ENCODE measurements at regions of chr2 and their contacts with region 1.

Region 1: GRCh38 chr2:159712143-159712928 is at the start of gene MARCHF7:
- DNase-seq: peak; percentile 95 to 98 (median 96)
- ATAC-seq: peak; percentile 88
- H3K4me3 ChIP-seq: peak within 1 kb of the TSS; percentile 89
- H3K4me3 Mint-ChIP-seq: peak within 1 kb of the TSS; percentile 100
- H3K27ac ChIP-seq: peak within 1 kb of the TSS; percentile 93 to 98
- H3K27ac Mint-ChIP-seq: peak within 1 kb of the TSS; percentile 94
- H3K4me1 ChIP-seq: peaks cover 31% of the 10 kb centered on the region
- H3K4me1 Mint-ChIP-seq: peaks cover 66% of the 10 kb centered on the region
- H3K27me3 ChIP-seq: no peaks in the 10 kb centered on the region
- H3K27me3 Mint-ChIP-seq: no peaks in the 10 kb centered on the region
- CTCF ChIP-seq: peak; percentile 22
- total RNA-seq, gene MARCHF7: 58.1 to 61.4 TPM

Region 2: DNA sequence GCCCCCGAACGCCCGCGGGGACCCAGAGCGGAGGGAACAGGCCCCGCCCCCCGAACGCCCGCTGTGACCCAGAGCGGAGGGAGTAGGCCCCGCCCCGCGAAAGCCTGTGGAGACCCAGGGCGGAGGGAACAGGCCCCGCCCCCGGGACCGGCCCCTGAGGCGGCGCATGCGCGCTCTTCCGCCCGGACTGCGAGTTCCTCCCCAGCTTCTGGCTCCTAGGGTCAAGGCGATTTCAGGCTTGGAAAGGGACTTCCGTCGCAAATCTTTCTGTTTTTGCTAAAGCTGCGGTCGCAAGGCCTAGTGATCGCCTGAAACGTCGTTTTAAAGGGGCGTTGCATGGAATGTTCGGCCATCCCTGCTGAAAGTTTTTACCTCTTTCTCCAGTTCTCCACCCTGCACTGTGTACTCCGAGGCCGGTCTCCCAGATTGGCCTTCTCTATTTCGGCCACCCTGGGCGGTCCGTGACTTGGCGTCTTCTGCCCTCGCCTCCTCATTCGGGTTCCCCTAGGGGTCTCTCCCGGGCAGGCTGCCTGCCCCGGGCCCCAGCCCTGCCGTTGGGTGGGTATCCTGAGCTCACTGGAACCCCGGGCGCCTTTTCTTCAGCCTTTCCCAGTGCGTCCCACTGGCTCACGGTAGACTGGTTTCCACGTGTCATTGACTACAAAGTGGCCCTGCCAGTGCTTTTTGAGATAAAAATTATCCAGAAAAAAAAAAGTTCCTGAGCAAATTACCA is 425.5 kb before region 1 on chr2:
- CTCF ChIA-PET with region 1: interaction called, 3 read pairs
- POLR2A ChIA-PET with region 1: interaction called, 25 read pairs
- intact Hi-C with region 1: loop called (anchors 2 to 5 kb)
- DNase-seq: peak; percentile 93 to 100 (median 97)
- ATAC-seq: peak; percentile 98
- H3K4me3 ChIP-seq: peak overlapping the region; percentile 88
- H3K4me3 Mint-ChIP-seq: peak overlapping the region; percentile 90
- H3K27ac ChIP-seq: peak overlapping the region in 1 of 2 donors; percentile 69
- H3K27ac Mint-ChIP-seq: peak overlapping the region; percentile 77
- H3K4me1 ChIP-seq: peaks cover 24% of the 10 kb centered on the region
- H3K4me1 Mint-ChIP-seq: peaks cover 46% of the 10 kb centered on the region
- H3K27me3 ChIP-seq: no peaks in the 10 kb centered on the region
- H3K27me3 Mint-ChIP-seq: no peaks in the 10 kb centered on the region
- CTCF ChIP-seq: no peak

Region 3: GRCh38 chr2:159615140-159615951 is 97.0 kb before region 1 on chr2:
- CTCF ChIA-PET with region 1: no interaction called
- POLR2A ChIA-PET with region 1: interaction called, 20 read pairs
- intact Hi-C with region 1: loop called in 1 of 2 experiments (anchors 5 kb)
- DNase-seq: peak in 11 of 14 experiments; percentile 8 to 66 (median 14)
- ATAC-seq: peak; percentile 50
- H3K4me3 ChIP-seq: peak overlapping the region; percentile 67
- H3K4me3 Mint-ChIP-seq: peak overlapping the region; percentile 86
- H3K27ac ChIP-seq: no peak overlapping the region
- H3K27ac Mint-ChIP-seq: no peak overlapping the region
- H3K4me1 ChIP-seq: peaks cover 10% of the 10 kb centered on the region
- H3K4me1 Mint-ChIP-seq: peaks cover 15% of the 10 kb centered on the region
- H3K27me3 ChIP-seq: peaks cover 11 to 13% of the 10 kb centered on the region in 2 experiments
- H3K27me3 Mint-ChIP-seq: peaks cover 17% of the 10 kb centered on the region
- CTCF ChIP-seq: no peak

Region 4: GRCh38 chr2:159785195-159785594 is 72.9 kb after region 1 on chr2:
- CTCF ChIA-PET with region 1: no interaction called
- POLR2A ChIA-PET with region 1: no interaction called
- intact Hi-C with region 1: no loop called
- DNase-seq: no peak
- ATAC-seq: no peak
- H3K4me3 ChIP-seq: no peak overlapping the region
- H3K4me3 Mint-ChIP-seq: no peak overlapping the region
- H3K27ac ChIP-seq: no peak overlapping the region
- H3K27ac Mint-ChIP-seq: no peak overlapping the region
- H3K4me1 ChIP-seq: no peaks in the 10 kb centered on the region
- H3K4me1 Mint-ChIP-seq: peaks cover 5% of the 10 kb centered on the region
- H3K27me3 ChIP-seq: no peaks in the 10 kb centered on the region
- H3K27me3 Mint-ChIP-seq: no peaks in the 10 kb centered on the region
- CTCF ChIP-seq: no peak

Region 5: DNA sequence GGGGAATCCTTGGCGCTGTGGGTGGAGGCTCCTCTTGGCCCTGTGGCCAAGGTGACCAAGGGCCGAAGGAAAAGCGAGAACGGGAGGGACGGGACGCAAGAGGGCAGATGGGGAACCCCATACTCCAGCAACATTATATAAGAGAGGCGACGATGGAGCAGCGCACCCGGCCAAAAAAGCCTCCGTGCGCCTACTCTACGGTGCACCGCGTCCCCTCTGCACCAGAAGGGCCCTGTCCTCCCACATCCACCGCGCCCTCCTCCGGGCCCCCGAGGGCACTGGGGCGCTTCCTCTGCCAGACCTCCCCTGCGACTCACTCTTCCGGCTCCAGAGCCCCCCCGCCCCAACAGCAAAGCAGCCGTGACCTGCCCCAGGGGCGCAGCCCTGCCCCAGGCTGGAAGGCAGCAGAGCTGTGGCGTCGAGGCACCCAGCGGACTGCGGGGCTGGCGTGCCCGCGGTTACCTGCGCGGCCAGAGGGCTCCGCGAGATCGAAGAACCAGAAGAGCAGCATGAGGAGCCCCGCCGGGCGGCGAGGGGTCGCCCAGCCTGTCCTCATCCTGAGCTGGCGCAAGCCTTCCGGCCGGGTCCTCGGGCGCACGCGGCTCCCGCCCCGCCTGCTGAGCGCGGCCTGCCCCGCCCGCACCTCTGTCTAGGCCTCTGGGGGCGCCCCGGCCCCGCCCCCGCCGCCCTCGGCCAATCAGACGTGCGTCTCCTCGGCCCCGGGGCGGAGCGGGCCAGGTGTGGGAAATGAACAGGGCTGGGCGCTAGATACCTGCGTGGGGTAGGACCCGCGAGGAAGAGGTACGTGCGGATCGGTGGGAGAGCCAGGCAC is 192.0 kb after region 1 on chr2:
- CTCF ChIA-PET with region 1: no interaction called
- POLR2A ChIA-PET with region 1: interaction called, 17 read pairs
- intact Hi-C with region 1: loop called in 1 of 2 experiments (anchors 5 kb)
- DNase-seq: peak; percentile 64 to 91 (median 80)
- ATAC-seq: peak; percentile 81
- H3K4me3 ChIP-seq: peak within 1 kb of the TSS; percentile 97
- H3K4me3 Mint-ChIP-seq: peak within 1 kb of the TSS; percentile 99
- H3K27ac ChIP-seq: peak within 1 kb of the TSS; percentile 73 to 91
- H3K27ac Mint-ChIP-seq: peak within 1 kb of the TSS; percentile 93
- H3K4me1 ChIP-seq: peaks cover 31% of the 10 kb centered on the region
- H3K4me1 Mint-ChIP-seq: peaks cover 39% of the 10 kb centered on the region
- H3K27me3 ChIP-seq: no peaks in the 10 kb centered on the region
- H3K27me3 Mint-ChIP-seq: no peaks in the 10 kb centered on the region
- CTCF ChIP-seq: no peak

Region 6: DNA sequence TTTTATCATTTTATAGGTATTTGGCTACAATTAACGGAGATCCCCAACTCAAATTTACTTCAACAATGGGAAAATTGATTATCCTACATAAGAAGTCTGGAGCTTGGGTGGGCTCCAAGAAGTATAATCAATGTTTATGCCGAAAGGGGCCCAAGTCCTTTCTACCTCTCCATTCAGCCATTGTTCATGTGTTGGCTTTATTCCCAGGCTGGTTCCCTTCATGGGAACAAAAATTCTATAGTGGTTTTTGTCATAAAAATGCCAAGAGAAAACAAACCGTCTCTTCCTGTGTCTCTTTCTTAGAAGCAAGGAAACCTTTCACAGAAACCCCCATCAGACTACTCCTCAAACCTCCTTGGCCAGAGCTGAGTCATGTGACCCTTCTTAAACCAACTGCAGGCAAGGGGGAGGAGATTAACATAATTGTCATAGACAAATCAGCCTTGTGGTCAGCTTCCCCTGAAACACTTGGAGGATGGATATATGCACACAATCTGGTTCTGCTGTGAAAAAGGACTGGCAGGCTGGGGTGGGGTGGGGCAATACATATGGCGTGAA is 1372.8 kb after region 1 on chr2:
- CTCF ChIA-PET with region 1: no interaction called
- POLR2A ChIA-PET with region 1: no interaction called
- intact Hi-C with region 1: no loop called
- DNase-seq: no peak
- ATAC-seq: no peak
- H3K4me3 ChIP-seq: no peak overlapping the region
- H3K4me3 Mint-ChIP-seq: no peak overlapping the region
- H3K27ac ChIP-seq: no peak overlapping the region
- H3K27ac Mint-ChIP-seq: no peak overlapping the region
- H3K4me1 ChIP-seq: no peaks in the 10 kb centered on the region
- H3K4me1 Mint-ChIP-seq: peaks cover 12% of the 10 kb centered on the region
- H3K27me3 ChIP-seq: no peaks in the 10 kb centered on the region
- H3K27me3 Mint-ChIP-seq: no peaks in the 10 kb centered on the region
- CTCF ChIP-seq: no peak

Region 7: GRCh38 chr2:161160226-161161069 is 1448.1 kb after region 1 on chr2 and contains the start of gene TANK:
- CTCF ChIA-PET with region 1: no interaction called
- POLR2A ChIA-PET with region 1: no interaction called
- intact Hi-C with region 1: loop called in 1 of 2 experiments (anchors 5 kb)
- DNase-seq: peak; percentile 80 to 96 (median 86)
- ATAC-seq: peak; percentile 88
- H3K4me3 ChIP-seq: peak within 1 kb of the TSS; percentile 92
- H3K4me3 Mint-ChIP-seq: peak within 1 kb of the TSS; percentile 93
- H3K27ac ChIP-seq: peak within 1 kb of the TSS; percentile 92 to 96
- H3K27ac Mint-ChIP-seq: peak within 1 kb of the TSS; percentile 89
- H3K4me1 ChIP-seq: peaks cover 2% of the 10 kb centered on the region
- H3K4me1 Mint-ChIP-seq: peaks cover 63% of the 10 kb centered on the region
- H3K27me3 ChIP-seq: no peaks in the 10 kb centered on the region
- H3K27me3 Mint-ChIP-seq: no peaks in the 10 kb centered on the region
- CTCF ChIP-seq: no peak
- total RNA-seq, gene TANK: 66.3 to 71.7 TPM